ENCODE measurements at regions of chr9 and their contacts with region 1.

Region 1: DNA sequence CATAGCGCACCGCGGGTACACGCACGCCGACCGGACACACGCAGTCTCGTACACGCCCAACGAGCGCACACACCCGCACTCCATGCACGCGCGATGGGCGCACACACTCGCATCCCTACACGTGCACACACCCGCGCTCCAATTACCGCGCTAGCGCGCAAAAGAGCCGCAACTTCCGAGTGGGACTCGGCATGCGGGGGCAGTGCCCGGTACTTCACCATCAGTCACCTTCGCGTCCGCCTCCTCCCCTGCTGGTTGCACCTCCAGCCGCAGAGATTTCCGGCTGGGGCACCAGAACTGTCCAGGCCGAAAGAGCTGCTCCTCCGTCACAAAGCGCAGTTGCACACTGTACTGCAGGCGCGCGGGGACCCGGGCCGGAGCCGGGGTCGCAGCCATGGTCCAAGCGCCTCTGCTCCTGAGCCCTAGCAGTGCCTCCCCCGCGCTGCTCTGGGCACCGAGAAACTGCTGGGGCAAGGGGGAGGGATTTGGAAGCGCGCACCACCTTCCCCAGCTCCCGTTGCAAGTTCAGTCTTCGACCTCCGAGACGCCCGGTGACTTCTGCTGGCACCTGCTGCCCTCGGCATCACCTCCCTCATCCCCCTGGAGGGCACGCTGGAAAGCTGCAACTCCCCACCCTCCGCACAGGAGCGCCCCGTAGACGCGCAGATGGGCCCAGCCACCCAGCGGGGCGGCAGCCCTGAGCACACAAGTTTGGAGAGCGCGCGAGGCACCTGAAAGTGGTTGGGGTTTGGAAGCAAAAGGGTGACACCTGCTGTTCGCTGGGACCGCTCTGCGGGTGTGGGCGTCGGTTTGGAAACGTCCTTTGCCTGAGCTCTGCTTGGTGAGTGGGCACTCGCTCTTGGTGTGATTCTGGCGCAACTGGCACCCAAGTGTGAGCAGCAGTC is 337.4 kb upstream of the PUM3 start:
- DNase-seq: peak in 1 of 2 donors; percentile 21
- ATAC-seq: peak in 5 of 8 donors; percentile 11 to 64 (median 50)
- H3K4me3 ChIP-seq: peak overlapping the region in 7 of 10 donors; percentile 4 to 41 (median 20)
- H3K27ac ChIP-seq: no peak overlapping the region
- H3K4me1 ChIP-seq: peaks cover 0 to 14% (median 10%) of the 10 kb centered on the region in 9 donors
- H3K27me3 ChIP-seq: peaks cover 0 to 68% (median 58%) of the 10 kb centered on the region in 7 donors
- CTCF ChIP-seq: peak in 7 of 9 donors; percentile 20 to 37 (median 27)

Region 2: GRCh38 chr9:2872257-2872935 is 308.9 kb before region 1 on chr9:
- intact Hi-C with region 1: loop called in 3 of 10 experiments (anchors 5 to 10 kb)
- DNase-seq: no peak
- ATAC-seq: no peak
- H3K4me3 ChIP-seq: no peak overlapping the region
- H3K27ac ChIP-seq: no peak overlapping the region
- H3K4me1 ChIP-seq: no peaks in the 10 kb centered on the region
- H3K27me3 ChIP-seq: peaks cover 0 to 50% (median 26%) of the 10 kb centered on the region in 7 donors
- CTCF ChIP-seq: peak in 6 of 9 donors; percentile 27 to 41 (median 32)

Region 3: DNA sequence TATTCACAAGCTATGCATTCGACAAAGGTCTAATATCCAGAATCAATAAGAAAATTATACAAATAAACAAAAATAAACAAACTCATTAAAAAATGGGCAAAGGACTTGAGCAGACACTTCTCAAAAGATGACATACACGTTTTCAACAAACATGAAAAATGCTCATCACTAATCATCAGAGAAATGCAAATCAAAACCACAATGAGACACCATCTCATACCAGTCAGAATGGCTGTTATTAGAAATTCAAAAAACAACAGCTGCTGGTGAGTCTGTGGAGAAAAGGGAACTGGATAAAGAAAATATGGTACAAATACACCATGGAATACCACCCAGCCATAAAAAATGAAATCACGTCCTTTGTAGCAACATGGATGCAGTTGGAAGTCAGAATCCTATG is 292.3 kb before region 1 on chr9:
- intact Hi-C with region 1: loop called in 1 of 10 experiments (anchors 10 kb)
- DNase-seq: no peak
- ATAC-seq: no peak
- H3K4me3 ChIP-seq: no peak overlapping the region
- H3K27ac ChIP-seq: no peak overlapping the region
- H3K4me1 ChIP-seq: no peaks in the 10 kb centered on the region
- H3K27me3 ChIP-seq: peaks cover 0 to 24% (median 4%) of the 10 kb centered on the region in 7 donors
- CTCF ChIP-seq: no peak

Region 4: GRCh38 chr9:2991292-2991691 is 190.0 kb before region 1 on chr9:
- intact Hi-C with region 1: no loop called
- DNase-seq: no peak
- ATAC-seq: no peak
- H3K4me3 ChIP-seq: no peak overlapping the region
- H3K27ac ChIP-seq: no peak overlapping the region
- H3K4me1 ChIP-seq: no peaks in the 10 kb centered on the region
- H3K27me3 ChIP-seq: peaks cover 0 to 21% (median 6%) of the 10 kb centered on the region in 7 donors
- CTCF ChIP-seq: no peak

Measured in heart right ventricle (tissue), 16 donors.